Ovary (tissue), 10 donors: ENCODE measurements at regions of chr1 and their contacts with region 1.

Region 1: DNA sequence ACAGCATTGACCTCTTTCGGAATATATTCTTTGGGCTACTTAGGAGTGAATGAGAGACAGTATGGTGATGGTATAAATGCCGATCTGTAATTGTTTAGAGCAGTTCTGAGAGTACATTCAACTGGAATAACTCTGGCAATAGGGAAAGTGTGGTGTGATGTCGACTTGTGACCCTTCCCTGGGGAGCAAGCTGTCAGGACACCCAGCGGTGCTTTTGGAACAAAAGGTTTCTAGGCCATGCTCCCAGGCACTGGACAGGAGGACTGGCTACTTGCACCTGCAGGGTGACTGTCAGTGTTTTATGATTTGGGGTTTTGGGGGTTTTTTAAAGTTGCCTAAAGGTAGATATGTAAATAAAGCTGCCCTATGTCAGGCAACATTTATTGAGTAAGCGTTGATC is 50.9 kb downstream of the MACO1 start:
- DNase-seq: no peak
- H3K4me3 ChIP-seq: no peak overlapping the region
- H3K27ac ChIP-seq: no peak overlapping the region
- H3K4me1 ChIP-seq: peaks cover 4% of the 10 kb centered on the region
- H3K27me3 ChIP-seq: no peaks in the 10 kb centered on the region
- CTCF ChIP-seq: no peak
- EP300 ChIP-seq: no peak
- POLR2A ChIP-seq: no peak

Region 2: GRCh38 chr1:25458541-25459298 is 22.9 kb before region 1 on chr1:
- intact Hi-C with region 1: no loop called
- DNase-seq: no peak
- H3K4me3 ChIP-seq: no peak overlapping the region
- H3K27ac ChIP-seq: no peak overlapping the region
- H3K4me1 ChIP-seq: peaks cover 6% of the 10 kb centered on the region
- H3K27me3 ChIP-seq: no peaks in the 10 kb centered on the region
- CTCF ChIP-seq: no peak
- EP300 ChIP-seq: no peak
- POLR2A ChIP-seq: no peak

Region 3: DNA sequence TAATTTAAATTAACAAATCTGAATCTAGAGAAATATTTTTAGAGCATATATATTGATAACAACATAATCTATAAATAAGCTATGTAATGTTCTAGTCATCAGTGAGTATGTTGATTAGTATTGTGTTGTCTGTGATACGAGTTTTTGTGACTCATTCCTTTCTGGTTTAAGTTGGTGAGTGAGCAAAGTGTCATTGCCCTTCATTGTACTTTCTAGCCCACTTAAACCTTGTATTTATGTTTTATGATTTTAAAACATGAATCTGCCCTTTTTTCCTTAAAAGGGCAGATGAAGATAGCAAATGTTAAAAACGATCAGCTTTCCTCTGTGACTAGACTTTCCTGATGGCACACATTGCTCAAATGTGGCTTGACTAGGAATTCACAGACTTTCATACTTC is 12.4 kb before region 1 on chr1:
- intact Hi-C with region 1: loop called in 1 of 4 experiments (anchors 2 kb)
- DNase-seq: no peak
- H3K4me3 ChIP-seq: no peak overlapping the region
- H3K27ac ChIP-seq: peak overlapping the region in 1 of 2 donors; percentile 68
- H3K4me1 ChIP-seq: peaks cover 19% of the 10 kb centered on the region
- H3K27me3 ChIP-seq: no peaks in the 10 kb centered on the region
- CTCF ChIP-seq: no peak
- EP300 ChIP-seq: no peak
- POLR2A ChIP-seq: no peak

Region 4: GRCh38 chr1:25549273-25550154 is 67.9 kb after region 1 on chr1:
- intact Hi-C with region 1: no loop called
- DNase-seq: no peak
- H3K4me3 ChIP-seq: no peak overlapping the region
- H3K27ac ChIP-seq: no peak overlapping the region
- H3K4me1 ChIP-seq: peaks cover 33% of the 10 kb centered on the region
- H3K27me3 ChIP-seq: no peaks in the 10 kb centered on the region
- CTCF ChIP-seq: no peak
- EP300 ChIP-seq: no peak
- POLR2A ChIP-seq: no peak

Region 5: DNA sequence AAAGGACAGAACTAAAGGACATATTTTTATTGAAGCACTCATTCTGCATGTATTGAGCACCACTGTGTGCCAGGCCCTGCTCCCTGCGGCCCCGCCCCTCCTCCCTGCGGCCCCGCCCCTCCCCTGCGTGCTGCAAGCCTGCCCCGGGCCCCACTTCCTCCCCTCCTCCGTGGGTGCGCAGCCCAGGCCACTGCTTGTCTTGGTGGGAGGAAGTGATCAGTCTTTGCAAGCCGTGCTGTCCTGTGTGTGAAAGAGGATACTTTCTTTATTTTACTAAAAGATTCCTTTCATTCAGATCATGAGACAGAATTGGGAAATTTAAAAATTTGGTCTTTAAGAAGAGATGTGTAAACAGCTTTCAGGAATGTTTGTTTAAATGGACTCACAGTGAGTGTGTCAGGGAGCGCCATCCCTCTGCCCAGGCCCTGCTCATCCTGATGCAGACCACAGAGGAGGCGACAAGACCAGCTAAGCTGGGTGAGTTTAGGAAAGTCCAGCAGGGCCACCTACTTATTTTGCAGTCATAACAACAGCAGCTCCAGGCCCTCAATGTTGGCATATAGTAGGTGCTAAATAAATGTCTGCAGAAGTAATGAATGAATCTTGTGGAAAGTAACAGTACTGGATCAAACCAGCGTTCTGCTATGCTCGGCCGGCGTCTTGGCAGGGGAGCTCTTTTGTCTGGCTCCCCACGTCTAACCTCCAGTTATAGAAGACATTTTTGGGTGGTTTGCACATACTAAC is 230.1 kb after region 1 on chr1:
- intact Hi-C with region 1: no loop called
- DNase-seq: no peak
- H3K4me3 ChIP-seq: no peak overlapping the region
- H3K27ac ChIP-seq: no peak overlapping the region
- H3K4me1 ChIP-seq: peaks cover 14% of the 10 kb centered on the region
- H3K27me3 ChIP-seq: no peaks in the 10 kb centered on the region
- CTCF ChIP-seq: no peak
- EP300 ChIP-seq: no peak
- POLR2A ChIP-seq: no peak

Region 6: GRCh38 chr1:25997828-25998761 is 516.5 kb after region 1 on chr1 and contains the start of gene PAFAH2:
- intact Hi-C with region 1: no loop called
- DNase-seq: peak; percentile 96 to 98 (median 97)
- H3K4me3 ChIP-seq: peak within 1 kb of the TSS; percentile 69
- H3K27ac ChIP-seq: peak within 1 kb of the TSS; percentile 21 to 45
- H3K4me1 ChIP-seq: peaks cover 6% of the 10 kb centered on the region
- H3K27me3 ChIP-seq: no peaks in the 10 kb centered on the region
- CTCF ChIP-seq: peak; percentile 99
- EP300 ChIP-seq: no peak
- POLR2A ChIP-seq: peak; percentile 37
- total RNA-seq, gene PAFAH2: 4.6 to 10.2 (median 6.1) TPM